KBM-7 (cell line): ENCODE measurements at regions of chr14 and their contacts with region 1.

Region 1: DNA sequence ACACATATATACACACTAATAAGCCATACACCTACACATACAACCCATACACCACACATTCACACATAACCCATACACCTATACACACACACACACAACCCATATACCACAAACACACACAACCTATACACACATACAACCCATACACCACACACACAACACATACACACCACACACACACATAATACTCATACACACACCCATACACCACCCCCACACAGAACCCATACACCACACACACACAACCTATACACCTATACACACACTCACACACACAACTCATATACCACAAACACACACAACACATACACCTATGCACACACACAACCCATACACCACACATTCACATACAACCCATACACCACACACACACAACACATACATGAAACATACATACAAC is 44.1 kb downstream of the TMEM121 start:
- DNase-seq: no peak

Region 2: GRCh38 chr14:105690692-105691091 is 120.2 kb after region 1 on chr14:
- in situ Hi-C with region 1: loop called (anchors 5 kb)
- DNase-seq: no peak